GM18951 (cell line): ENCODE measurements at regions of chr19 and their contacts with region 1.

Region 1: GRCh38 chr19:2912306-2912705 is 11.6 kb downstream of the ZNF57 start:
- POLR2A ChIP-seq: no peak

Region 2: GRCh38 chr19:2475702-2476450 is 436.4 kb before region 1 on chr19 and contains the start of gene GADD45B:
- in situ Hi-C with region 1: no loop called
- POLR2A ChIP-seq: peak; percentile 100

Region 3: DNA sequence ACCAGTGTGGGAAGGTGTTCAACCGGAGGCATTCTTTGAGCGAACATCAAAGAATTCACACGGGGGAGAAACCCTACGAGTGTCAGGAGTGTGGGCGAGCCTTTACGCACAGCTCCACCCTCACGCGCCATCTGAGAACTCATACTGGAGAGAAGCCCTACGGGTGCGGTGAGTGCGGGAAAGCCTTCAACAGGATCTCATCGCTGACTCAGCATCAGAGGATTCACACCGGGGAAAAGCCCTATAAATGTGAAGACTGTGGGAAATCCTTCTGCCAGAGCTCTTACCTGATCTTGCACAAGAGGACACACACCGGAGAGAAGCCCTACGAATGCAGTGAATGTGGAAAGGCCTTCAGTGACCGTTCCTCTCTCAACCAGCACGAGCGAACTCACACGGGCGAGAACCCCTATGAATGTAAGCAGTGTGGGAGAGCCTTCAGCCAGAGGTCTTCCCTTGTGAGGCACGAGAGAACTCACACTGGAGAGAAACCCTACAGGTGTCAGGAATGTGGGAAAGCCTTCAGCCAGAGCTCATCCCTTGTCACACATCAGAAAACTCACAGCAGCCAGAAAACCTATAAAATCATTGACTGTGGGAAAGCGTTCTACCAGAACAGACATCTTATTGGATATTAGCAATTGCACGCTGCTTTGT is 78.0 kb before region 1 on chr19:
- in situ Hi-C with region 1: loop called (anchors 10 kb)
- POLR2A ChIP-seq: no peak